T-cell (primary cell): ENCODE measurements at regions of chr13 and their contacts with region 1.

Region 1: GRCh38 chr13:50529154-50529882 is 314.2 kb downstream of the DLEU7 start:
- DNase-seq: no peak
- ATAC-seq: peak; percentile 31 to 69 (median 50)
- H3K4me3 ChIP-seq: no peak overlapping the region
- H3K4me3 Mint-ChIP-seq: peak overlapping the region in 1 of 3 donors; percentile 4
- H3K27ac ChIP-seq: no peak overlapping the region
- H3K27ac Mint-ChIP-seq: peak overlapping the region; percentile 11 to 64
- H3K4me1 ChIP-seq: peaks cover 9 to 10% of the 10 kb centered on the region in 2 experiments
- H3K4me1 Mint-ChIP-seq: peaks cover 28 to 37% (median 28%) of the 10 kb centered on the region in 3 donors
- H3K27me3 ChIP-seq: no peaks in the 10 kb centered on the region
- H3K27me3 Mint-ChIP-seq: no peaks in the 10 kb centered on the region

Region 2: DNA sequence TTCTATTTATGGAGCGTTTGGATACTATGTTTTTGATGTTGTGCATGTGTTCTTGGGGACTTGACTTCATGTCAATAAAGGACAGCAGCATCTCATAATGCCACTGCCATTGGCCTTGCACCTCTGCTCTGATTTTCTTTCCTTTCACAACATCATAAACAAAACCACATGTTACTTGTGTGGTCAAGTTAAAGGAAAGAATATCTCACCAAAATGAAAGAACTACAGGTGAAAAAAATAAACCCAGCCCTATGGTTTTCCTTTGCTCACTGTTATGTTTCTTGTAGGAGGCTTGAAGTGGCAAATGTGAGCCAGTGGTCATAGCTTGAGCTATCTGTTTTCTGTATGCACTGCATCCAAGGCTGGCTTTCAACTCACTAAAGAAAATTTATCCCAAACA is 273.7 kb before region 1 on chr13:
- CTCF ChIA-PET with region 1: no interaction called
- POLR2A ChIA-PET with region 1: interaction called in 1 of 2 experiments, 13 read pairs
- DNase-seq: peak in 1 of 35 experiments; percentile 51
- ATAC-seq: peak in 3 of 4 experiments; percentile 39 to 72 (median 57)
- H3K4me3 ChIP-seq: no peak overlapping the region
- H3K4me3 Mint-ChIP-seq: no peak overlapping the region
- H3K27ac ChIP-seq: peak overlapping the region; percentile 31
- H3K27ac Mint-ChIP-seq: peak overlapping the region in 1 of 2 donors; percentile 78
- H3K4me1 ChIP-seq: peaks cover 8 to 13% of the 10 kb centered on the region in 2 experiments
- H3K4me1 Mint-ChIP-seq: peaks cover 22 to 52% (median 44%) of the 10 kb centered on the region in 3 donors
- H3K27me3 ChIP-seq: no peaks in the 10 kb centered on the region
- H3K27me3 Mint-ChIP-seq: no peaks in the 10 kb centered on the region

Region 3: GRCh38 chr13:50374517-50374916 is 154.8 kb before region 1 on chr13:
- CTCF ChIA-PET with region 1: no interaction called
- POLR2A ChIA-PET with region 1: no interaction called
- DNase-seq: no peak
- ATAC-seq: no peak
- H3K4me3 ChIP-seq: no peak overlapping the region
- H3K4me3 Mint-ChIP-seq: no peak overlapping the region
- H3K27ac ChIP-seq: no peak overlapping the region
- H3K27ac Mint-ChIP-seq: no peak overlapping the region
- H3K4me1 ChIP-seq: peaks cover 0 to 8% of the 10 kb centered on the region in 2 experiments
- H3K4me1 Mint-ChIP-seq: peaks cover 8 to 21% (median 11%) of the 10 kb centered on the region in 3 donors
- H3K27me3 ChIP-seq: no peaks in the 10 kb centered on the region
- H3K27me3 Mint-ChIP-seq: peaks cover 7 to 16% of the 10 kb centered on the region in 2 donors